Activated CD4-positive, alpha-beta T cell treated with anti-CD3 and anti-CD28 coated beads, Interleukin-2, amount 10 ng/mL, durations not matched to agents 24 days and 14 days (primary cell): ENCODE measurements at regions of chr16 and their contacts with region 1.

Region 1: GRCh38 chr16:8621572-8622314 is at the start of gene METTL22:
- DNase-seq: peak; percentile 98
- H3K4me3 Mint-ChIP-seq: peak within 1 kb of the TSS; percentile 96
- H3K27ac Mint-ChIP-seq: peak within 1 kb of the TSS; percentile 92
- H3K4me1 Mint-ChIP-seq: peaks cover 12% of the 10 kb centered on the region
- H3K27me3 Mint-ChIP-seq: peaks cover 20% of the 10 kb centered on the region
- total RNA-seq, gene METTL22: 36.2 and 38.4 TPM in 2 replicates

Region 2: GRCh38 chr16:8634991-8635736 is 13.4 kb after region 1 on chr16:
- intact Hi-C with region 1: no loop called
- DNase-seq: no peak
- H3K4me3 Mint-ChIP-seq: no peak overlapping the region
- H3K27ac Mint-ChIP-seq: no peak overlapping the region
- H3K4me1 Mint-ChIP-seq: no peaks in the 10 kb centered on the region
- H3K27me3 Mint-ChIP-seq: no peaks in the 10 kb centered on the region

Region 3: GRCh38 chr16:8655184-8655717 is 33.5 kb after region 1 on chr16:
- intact Hi-C with region 1: loop called (anchors 5 kb)
- DNase-seq: peak; percentile 81
- H3K4me3 Mint-ChIP-seq: no peak overlapping the region
- H3K27ac Mint-ChIP-seq: no peak overlapping the region
- H3K4me1 Mint-ChIP-seq: peaks cover 6% of the 10 kb centered on the region
- H3K27me3 Mint-ChIP-seq: no peaks in the 10 kb centered on the region

Region 4: GRCh38 chr16:8674413-8675022 is 52.8 kb after region 1 on chr16 and contains the start of gene ABAT:
- intact Hi-C with region 1: loop called (anchors 5 kb)
- DNase-seq: peak; percentile 97
- H3K4me3 Mint-ChIP-seq: peak within 1 kb of the TSS; percentile 88
- H3K27ac Mint-ChIP-seq: peak within 1 kb of the TSS; percentile 91
- H3K4me1 Mint-ChIP-seq: peaks cover 15% of the 10 kb centered on the region
- H3K27me3 Mint-ChIP-seq: no peaks in the 10 kb centered on the region
- total RNA-seq, gene ABAT: 5.0 and 5.9 TPM in 2 replicates